H1 (cell line): ENCODE measurements at regions of chr3 and their contacts with region 1.

Region 1: DNA sequence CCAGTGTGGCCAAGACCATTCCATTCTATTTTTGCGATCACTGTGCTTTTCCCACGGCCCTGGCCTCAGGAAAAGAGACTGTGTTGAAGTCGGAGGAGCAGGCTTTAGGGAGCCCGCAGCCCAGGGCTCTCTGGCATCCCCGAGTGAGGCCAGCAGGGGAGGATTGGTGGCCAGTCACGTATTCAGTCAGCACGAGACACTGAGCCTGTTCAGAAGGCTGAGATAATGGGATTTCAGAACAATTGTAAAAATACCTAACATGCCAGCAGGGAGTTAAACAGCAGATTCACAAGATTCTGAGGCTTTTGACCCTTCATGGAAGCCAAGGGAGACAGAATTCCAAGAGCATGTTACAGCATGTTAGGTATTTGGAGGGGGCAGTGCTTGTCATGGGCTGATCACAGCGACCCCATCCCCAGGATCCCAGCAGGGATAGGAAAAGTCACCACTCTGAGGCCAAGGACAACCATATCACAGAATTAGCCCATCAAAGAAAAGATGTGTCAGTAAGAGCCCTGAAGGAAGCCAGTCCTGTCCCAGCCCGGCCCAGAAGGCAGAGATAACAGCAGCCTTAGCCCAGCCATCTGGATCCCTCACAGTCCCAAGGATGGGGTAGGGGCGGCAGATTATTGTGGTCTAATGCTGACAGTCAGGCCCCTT is 40.6 kb downstream of the AMOTL2 start:
- DNase-seq: no peak
- H3K4me3 ChIP-seq: no peak overlapping the region
- H3K27ac ChIP-seq: no peak overlapping the region
- H3K4me1 ChIP-seq: peaks cover 6 to 21% (median 13%) of the 10 kb centered on the region in 4 experiments
- H3K27me3 ChIP-seq: no peaks in the 10 kb centered on the region
- CTCF ChIP-seq: peak in 1 of 3 experiments; percentile 5; a peak in 1 of 4 replicates
- EP300 ChIP-seq: no peak
- POLR2A ChIP-seq: no peak
- RAD21 ChIP-seq: no peak; a peak in 1 of 4 replicates

Region 2: GRCh38 chr3:134317106-134317947 is 16.3 kb before region 1 on chr3:
- CTCF ChIA-PET with region 1: interaction called, 17 read pairs
- POLR2A ChIA-PET with region 1: interaction called, 100 read pairs
- DNase-seq: peak in 1 of 2 experiments; percentile 39
- H3K4me3 ChIP-seq: no peak overlapping the region
- H3K27ac ChIP-seq: no peak overlapping the region
- H3K4me1 ChIP-seq: peaks cover 10 to 28% (median 18%) of the 10 kb centered on the region in 4 experiments
- H3K27me3 ChIP-seq: peaks cover 6 to 25% (median 18%) of the 10 kb centered on the region in 4 experiments
- CTCF ChIP-seq: no peak
- EP300 ChIP-seq: no peak
- POLR2A ChIP-seq: no peak
- RAD21 ChIP-seq: no peak

Region 3: GRCh38 chr3:134348524-134348923 is 14.9 kb after region 1 on chr3:
- CTCF ChIA-PET with region 1: interaction called, 23 read pairs
- POLR2A ChIA-PET with region 1: interaction called, 1,731 read pairs
- DNase-seq: no peak
- H3K4me3 ChIP-seq: no peak overlapping the region
- H3K27ac ChIP-seq: no peak overlapping the region
- H3K4me1 ChIP-seq: peaks cover 0 to 5% (median 2%) of the 10 kb centered on the region in 4 experiments; a peak in 2 of 7 replicates
- H3K27me3 ChIP-seq: no peaks in the 10 kb centered on the region
- CTCF ChIP-seq: no peak
- EP300 ChIP-seq: no peak
- POLR2A ChIP-seq: no peak
- RAD21 ChIP-seq: no peak

Region 4: DNA sequence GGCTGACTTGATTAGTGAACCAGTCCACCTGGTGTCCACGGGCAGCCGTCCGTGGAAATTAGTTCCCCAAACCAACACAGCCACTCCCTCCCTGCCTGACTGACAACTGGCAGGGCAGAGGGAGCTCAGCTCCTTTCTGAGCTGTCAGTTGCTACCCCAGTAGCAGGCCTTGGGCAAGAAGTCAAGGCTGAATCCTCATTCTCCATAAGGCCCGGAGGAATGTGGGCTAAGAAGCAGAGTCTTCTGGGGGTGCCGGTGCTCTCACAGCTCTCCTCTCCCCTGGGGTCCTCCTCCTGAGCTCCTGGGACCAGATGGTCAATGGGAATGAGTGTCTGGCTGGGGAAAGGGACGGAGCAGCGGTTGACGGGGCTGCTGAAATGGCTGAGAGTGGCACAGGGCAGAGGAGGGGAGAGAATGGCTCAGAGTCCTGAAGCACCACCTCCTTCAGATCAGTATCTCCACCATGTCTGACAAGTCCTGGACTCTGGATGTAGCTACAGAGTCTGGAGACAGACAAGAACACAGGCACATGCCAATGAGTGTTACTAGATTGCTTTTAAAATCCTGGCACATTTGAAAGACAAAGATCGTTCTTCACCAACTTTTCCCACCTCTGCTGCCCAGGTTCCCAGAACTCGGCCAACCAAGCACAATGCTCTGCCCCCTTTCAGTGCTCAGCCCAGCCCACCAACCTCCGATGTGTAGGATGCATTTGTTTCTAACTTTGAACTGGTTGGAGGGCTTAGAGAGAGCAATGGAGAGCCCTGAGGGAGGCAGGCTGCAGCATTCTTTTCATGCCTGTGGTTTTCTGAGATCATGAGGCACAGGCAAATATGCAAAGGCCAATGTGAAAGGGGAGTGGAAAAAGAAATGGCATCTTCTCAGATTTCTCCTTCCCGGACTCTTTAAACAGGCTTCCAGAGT is 23.9 kb after region 1 on chr3:
- CTCF ChIA-PET with region 1: interaction called, 19 read pairs
- POLR2A ChIA-PET with region 1: interaction called, 1,731 read pairs
- DNase-seq: peak in 1 of 2 experiments; percentile 60
- H3K4me3 ChIP-seq: no peak overlapping the region
- H3K27ac ChIP-seq: peak overlapping the region; percentile 23; the same call in 1 of the 2 replicates
- H3K4me1 ChIP-seq: peaks cover 0 to 10% (median 4%) of the 10 kb centered on the region in 4 experiments; a peak in 6 of 7 replicates
- H3K27me3 ChIP-seq: no peaks in the 10 kb centered on the region
- CTCF ChIP-seq: no peak
- EP300 ChIP-seq: no peak
- POLR2A ChIP-seq: peak in 1 of 2 experiments; percentile 15; a peak in 1 of 3 replicates
- RAD21 ChIP-seq: no peak

Region 5: DNA sequence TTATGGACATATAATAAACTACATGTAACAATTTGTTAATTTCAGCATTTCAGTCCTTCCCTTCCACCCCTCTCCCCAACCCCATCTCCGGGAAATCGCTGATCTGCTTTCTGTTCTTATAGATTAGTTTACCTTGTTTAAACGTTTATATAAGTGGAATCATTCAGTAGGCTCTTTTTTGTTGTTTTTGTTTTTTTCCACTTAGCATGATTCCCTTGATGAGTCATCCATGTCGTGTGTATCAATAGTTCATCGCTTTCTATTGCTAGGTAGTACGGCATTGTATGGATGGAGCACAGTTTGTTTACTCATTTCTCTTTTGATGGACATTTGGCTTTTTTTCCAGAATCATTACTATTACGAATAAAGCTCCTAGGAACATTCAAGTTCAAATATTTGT is 64.1 kb after region 1 on chr3:
- CTCF ChIA-PET with region 1: no interaction called
- POLR2A ChIA-PET with region 1: no interaction called
- DNase-seq: no peak
- H3K4me3 ChIP-seq: no peak overlapping the region
- H3K27ac ChIP-seq: no peak overlapping the region
- H3K4me1 ChIP-seq: peaks cover 0 to 3% (median 0%) of the 10 kb centered on the region in 4 experiments; a peak in 1 of 7 replicates
- H3K27me3 ChIP-seq: no peaks in the 10 kb centered on the region; a peak in 1 of 7 replicates
- CTCF ChIP-seq: no peak
- EP300 ChIP-seq: no peak
- POLR2A ChIP-seq: no peak
- RAD21 ChIP-seq: no peak

Region 6: DNA sequence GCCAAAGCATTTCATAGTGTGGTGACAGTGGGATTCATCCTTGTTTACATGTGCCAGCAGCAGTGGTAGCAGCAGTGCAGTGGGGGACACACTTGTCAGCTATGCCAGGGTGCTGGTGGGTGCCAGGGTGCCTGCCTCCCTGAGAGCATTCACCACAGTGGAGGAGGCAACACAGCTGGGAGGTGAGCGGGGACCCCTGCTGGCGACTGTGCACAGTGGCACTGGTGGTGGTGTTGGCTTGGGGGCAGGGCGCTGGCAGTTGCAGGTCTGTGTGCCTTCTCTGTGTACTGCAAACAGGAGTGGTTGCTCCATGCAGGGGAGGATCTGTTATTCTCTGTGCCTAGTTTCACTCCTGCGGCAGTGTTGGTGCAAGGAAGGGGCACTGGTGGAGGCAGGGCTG is 193.4 kb after region 1 on chr3:
- CTCF ChIA-PET with region 1: no interaction called
- POLR2A ChIA-PET with region 1: no interaction called
- DNase-seq: peak; percentile 13 to 72
- H3K4me3 ChIP-seq: no peak overlapping the region
- H3K27ac ChIP-seq: no peak overlapping the region
- H3K4me1 ChIP-seq: peaks cover 0 to 2% (median 0%) of the 10 kb centered on the region in 4 experiments; a peak in 2 of 7 replicates
- H3K27me3 ChIP-seq: no peaks in the 10 kb centered on the region
- CTCF ChIP-seq: peak; percentile 66 to 96 (median 89)
- EP300 ChIP-seq: no peak
- POLR2A ChIP-seq: no peak
- RAD21 ChIP-seq: peak; percentile 41 to 59